ENCODE measurements at regions of chr10 and their contacts with region 1.

Region 1: DNA sequence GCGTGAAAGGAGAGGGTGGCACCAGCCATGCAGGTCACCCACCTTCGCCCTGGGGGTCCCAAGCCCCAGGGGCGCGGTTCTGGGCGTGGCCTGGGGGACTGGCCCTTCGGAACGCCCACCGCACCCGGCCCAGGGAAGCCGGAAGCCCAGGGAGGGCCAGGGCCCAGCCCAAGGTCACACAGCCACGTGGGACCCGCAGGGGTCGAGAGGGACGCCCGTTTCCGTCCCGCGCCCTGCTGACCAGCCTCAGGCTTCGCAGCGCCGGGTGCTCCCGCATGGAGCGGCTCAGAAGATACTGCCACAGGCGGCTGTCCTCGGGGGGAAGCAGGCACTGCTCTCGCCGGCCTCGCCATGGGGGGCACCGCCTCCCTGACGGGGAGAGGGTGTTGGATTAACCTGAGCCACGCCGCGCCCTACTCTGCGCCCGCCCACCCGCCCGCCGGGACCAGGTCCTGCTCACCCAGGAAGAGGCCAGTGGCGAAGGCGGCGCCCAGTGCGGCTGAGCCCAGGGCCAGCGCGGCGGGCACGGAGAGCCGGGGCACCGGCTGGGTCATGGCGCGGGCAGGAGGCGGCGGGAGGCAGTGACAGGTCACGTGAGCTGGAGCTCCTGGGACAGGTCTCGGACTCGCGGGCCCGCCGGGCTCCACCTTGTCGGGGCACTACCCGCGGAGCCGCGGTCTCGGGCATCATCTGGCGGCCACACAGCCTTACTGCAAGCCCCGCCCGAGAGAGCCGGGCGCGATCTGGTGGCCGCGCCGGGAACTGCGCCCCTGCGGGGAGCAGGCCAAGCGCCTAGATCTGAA is at the start of gene COMTD1:
- DNase-seq: peak; percentile 98
- ATAC-seq: peak; percentile 76
- H3K4me3 Mint-ChIP-seq: peak within 1 kb of the TSS; percentile 79
- H3K27ac Mint-ChIP-seq: peak within 1 kb of the TSS; percentile 89
- H3K4me1 Mint-ChIP-seq: peaks cover 31% of the 10 kb centered on the region
- H3K27me3 Mint-ChIP-seq: no peaks in the 10 kb centered on the region
- total RNA-seq, gene COMTD1: 28.1 to 41.0 TPM

Region 2: DNA sequence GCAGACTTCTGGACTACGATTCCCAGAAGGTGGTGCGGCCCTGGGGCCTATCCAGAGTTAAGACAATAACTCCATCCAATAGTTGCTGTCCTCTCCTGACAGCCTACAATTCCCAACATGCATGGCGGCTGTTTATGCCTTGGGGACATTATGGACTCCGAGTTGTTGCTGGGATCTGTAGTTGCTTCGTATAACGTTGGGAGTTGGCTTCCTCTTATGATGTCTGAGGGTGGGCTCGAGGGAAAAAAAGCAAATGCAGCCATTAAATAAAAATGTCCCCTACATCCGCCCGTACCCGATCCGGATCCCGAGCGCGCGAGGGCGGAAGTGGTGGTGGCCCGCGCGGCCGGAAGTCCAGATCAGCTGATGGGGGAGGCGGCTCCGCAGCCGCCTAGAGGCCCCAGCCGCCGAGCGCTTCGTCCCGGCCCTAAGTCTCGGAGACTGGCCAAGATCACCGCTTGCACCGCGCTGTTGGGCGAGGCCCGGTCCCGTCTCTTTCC is 1450.3 kb before region 1 on chr10 and contains the start of gene ZSWIM8:
- CTCF ChIA-PET with region 1: no interaction called
- POLR2A ChIA-PET with region 1: no interaction called
- intact Hi-C with region 1: loop called in 1 of 2 experiments (anchors 5 kb)
- DNase-seq: peak; percentile 90
- ATAC-seq: peak; percentile 85
- H3K4me3 Mint-ChIP-seq: peak within 1 kb of the TSS; percentile 83
- H3K27ac Mint-ChIP-seq: peak within 1 kb of the TSS; percentile 98
- H3K4me1 Mint-ChIP-seq: peaks cover 46% of the 10 kb centered on the region
- H3K27me3 Mint-ChIP-seq: no peaks in the 10 kb centered on the region
- total RNA-seq, gene ZSWIM8: 40.1 to 67.3 TPM

Region 3: GRCh38 chr10:74151056-74151878 is 1084.3 kb before region 1 on chr10 and contains the start of gene ADK:
- CTCF ChIA-PET with region 1: interaction called, 3 read pairs
- POLR2A ChIA-PET with region 1: no interaction called
- intact Hi-C with region 1: loop called (anchors 1 to 5 kb)
- DNase-seq: peak; percentile 100
- ATAC-seq: peak; percentile 97
- H3K4me3 Mint-ChIP-seq: no peak within 1 kb of the TSS
- H3K27ac Mint-ChIP-seq: peak within 1 kb of the TSS; percentile 85
- H3K4me1 Mint-ChIP-seq: peaks cover 45% of the 10 kb centered on the region
- H3K27me3 Mint-ChIP-seq: no peaks in the 10 kb centered on the region
- total RNA-seq, gene ADK: 53.7 to 55.0 TPM

Region 4: DNA sequence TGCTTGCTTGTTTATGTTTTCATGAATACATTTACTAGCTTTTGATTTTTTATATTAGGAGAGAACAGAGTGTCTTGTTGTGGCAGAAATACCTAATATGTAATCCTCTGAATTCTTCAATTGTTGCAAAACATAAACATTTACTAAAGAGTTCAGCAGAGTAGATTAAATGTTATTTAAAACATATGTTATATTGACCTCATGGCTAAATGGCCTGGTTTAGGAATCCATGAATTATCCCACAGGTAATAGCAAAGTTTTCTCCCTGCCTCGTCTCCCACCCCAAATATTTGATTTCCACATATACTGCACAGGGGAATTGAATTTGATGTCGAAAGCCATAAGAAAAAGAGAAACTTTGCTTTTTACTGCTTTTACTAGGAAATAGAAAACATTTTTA is 972.7 kb before region 1 on chr10:
- CTCF ChIA-PET with region 1: interaction called, 3 read pairs
- POLR2A ChIA-PET with region 1: no interaction called
- intact Hi-C with region 1: loop called in 1 of 2 experiments (anchors 1 kb)
- DNase-seq: no peak
- ATAC-seq: no peak
- H3K4me3 Mint-ChIP-seq: no peak overlapping the region
- H3K27ac Mint-ChIP-seq: no peak overlapping the region
- H3K4me1 Mint-ChIP-seq: peaks cover 17% of the 10 kb centered on the region
- H3K27me3 Mint-ChIP-seq: no peaks in the 10 kb centered on the region

Region 5: DNA sequence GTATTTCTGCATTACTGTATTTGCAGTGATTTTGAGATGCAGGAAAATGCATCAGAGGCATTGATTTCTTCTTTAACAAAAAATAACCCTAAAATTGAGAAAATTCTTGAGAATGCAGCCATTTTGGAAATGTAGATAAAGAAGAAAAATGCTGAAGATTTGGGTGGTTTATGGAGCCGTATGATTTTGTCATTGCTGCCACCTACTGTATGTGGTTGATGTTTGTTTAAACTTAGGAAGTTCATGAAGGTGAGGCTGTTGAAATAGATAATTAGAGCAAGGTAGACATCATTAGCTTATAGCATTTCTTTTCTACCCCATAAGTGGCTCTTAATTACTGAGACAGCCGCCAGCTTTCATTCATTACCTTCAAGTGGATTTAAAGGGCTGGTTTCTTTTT is 216.2 kb before region 1 on chr10:
- CTCF ChIA-PET with region 1: interaction called, 5 read pairs
- POLR2A ChIA-PET with region 1: no interaction called
- intact Hi-C with region 1: loop called in 1 of 2 experiments (anchors 5 kb)
- DNase-seq: no peak
- ATAC-seq: peak; percentile 34
- H3K4me3 Mint-ChIP-seq: no peak overlapping the region
- H3K27ac Mint-ChIP-seq: no peak overlapping the region
- H3K4me1 Mint-ChIP-seq: peaks cover 31% of the 10 kb centered on the region
- H3K27me3 Mint-ChIP-seq: no peaks in the 10 kb centered on the region

Region 6: GRCh38 chr10:75187961-75188426 is 47.6 kb before region 1 on chr10:
- CTCF ChIA-PET with region 1: interaction called, 40 read pairs
- POLR2A ChIA-PET with region 1: interaction called, 6 read pairs
- intact Hi-C with region 1: loop called (anchors 1 kb)
- DNase-seq: peak; percentile 81
- ATAC-seq: peak; percentile 91
- H3K4me3 Mint-ChIP-seq: no peak overlapping the region
- H3K27ac Mint-ChIP-seq: peak overlapping the region; percentile 72
- H3K4me1 Mint-ChIP-seq: peaks cover 10% of the 10 kb centered on the region
- H3K27me3 Mint-ChIP-seq: no peaks in the 10 kb centered on the region

Measured in activated CD4-positive, alpha-beta T cell treated with anti-CD3 and anti-CD28 coated beads for 36 hours (primary cell).